Natural killer cell (primary cell): ENCODE measurements at regions of chr16 and their contacts with region 1.

Region 1: GRCh38 chr16:71845639-71846430 is at the start of gene ATXN1L:
- DNase-seq: peak; percentile 96 to 97
- ATAC-seq: peak; percentile 92 to 97 (median 93)
- H3K4me3 ChIP-seq: peak within 1 kb of the TSS; percentile 89
- H3K4me3 Mint-ChIP-seq: peak within 1 kb of the TSS; percentile 94
- H3K27ac ChIP-seq: peak within 1 kb of the TSS; percentile 88
- H3K27ac Mint-ChIP-seq: peak within 1 kb of the TSS; percentile 94 to 97
- H3K4me1 ChIP-seq: peaks cover 13% of the 10 kb centered on the region
- H3K4me1 Mint-ChIP-seq: peaks cover 30 to 37% of the 10 kb centered on the region in 2 donors
- H3K27me3 ChIP-seq: no peaks in the 10 kb centered on the region
- H3K27me3 Mint-ChIP-seq: no peaks in the 10 kb centered on the region
- CTCF ChIP-seq: no peak
- total RNA-seq, gene ATXN1L: 59.7 to 66.9 (median 59.8) TPM

Region 2: GRCh38 chr16:71626018-71626857 is 219.6 kb before region 1 on chr16 and contains the start of gene MARVELD3:
- intact Hi-C with region 1: no loop called
- DNase-seq: peak in 1 of 2 donors; percentile 31
- ATAC-seq: no peak
- H3K4me3 ChIP-seq: peak within 1 kb of the TSS; percentile 39
- H3K4me3 Mint-ChIP-seq: no peak within 1 kb of the TSS
- H3K27ac ChIP-seq: no peak within 1 kb of the TSS
- H3K27ac Mint-ChIP-seq: no peak within 1 kb of the TSS
- H3K4me1 ChIP-seq: peaks cover 11% of the 10 kb centered on the region
- H3K4me1 Mint-ChIP-seq: peaks cover 7 to 8% of the 10 kb centered on the region in 2 donors
- H3K27me3 ChIP-seq: peaks cover 17% of the 10 kb centered on the region
- H3K27me3 Mint-ChIP-seq: peaks cover 14 to 18% of the 10 kb centered on the region in 2 donors
- CTCF ChIP-seq: no peak
- total RNA-seq, gene MARVELD3: not detected

Region 3: DNA sequence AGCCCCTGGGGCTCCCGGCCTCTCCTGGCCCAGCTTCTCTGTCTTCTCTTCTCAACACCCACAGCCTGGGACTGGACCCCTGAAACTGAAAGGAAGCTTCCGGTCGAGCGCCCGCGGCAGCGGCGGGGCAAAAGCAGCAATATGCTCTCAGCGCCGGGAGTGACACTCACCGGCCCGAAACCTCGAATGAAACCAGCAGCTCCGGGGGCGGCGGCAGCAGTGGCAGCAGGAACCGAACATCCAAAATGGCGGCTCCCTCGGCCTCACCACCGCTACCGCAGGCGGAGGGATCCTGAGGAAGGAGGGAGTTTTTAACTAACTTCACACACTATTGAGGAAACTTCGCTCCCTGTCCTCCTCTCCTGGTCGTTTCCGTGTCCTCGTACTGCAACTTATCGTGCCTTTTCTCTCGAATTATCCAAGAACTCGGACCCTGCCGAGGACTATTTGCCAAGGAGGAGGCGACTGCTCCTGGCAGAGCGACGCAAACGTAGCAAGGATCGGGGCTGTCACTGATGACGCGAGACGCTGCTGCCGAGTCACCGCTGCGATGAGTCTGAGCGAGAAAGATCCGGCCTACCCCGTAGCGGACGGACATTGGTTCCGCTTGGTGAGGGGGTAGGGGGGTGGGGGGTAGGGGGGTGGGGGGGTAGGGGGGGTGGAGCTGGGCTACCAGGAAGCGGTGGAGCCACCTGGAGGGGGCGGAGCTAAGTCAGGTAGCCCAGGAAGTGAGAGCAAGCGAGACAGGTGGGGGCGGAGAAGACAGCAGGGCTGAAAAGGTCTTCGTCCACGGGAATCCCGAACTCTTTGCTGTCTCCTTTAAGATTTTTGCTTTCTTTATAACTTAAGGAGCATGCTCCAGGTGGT is 37.0 kb before region 1 on chr16 and contains the start of gene AP1G1:
- intact Hi-C with region 1: loop called (anchors 1 kb)
- DNase-seq: peak; percentile 86 to 98
- ATAC-seq: peak; percentile 90 to 97 (median 92)
- H3K4me3 ChIP-seq: peak within 1 kb of the TSS; percentile 89
- H3K4me3 Mint-ChIP-seq: peak within 1 kb of the TSS; percentile 90
- H3K27ac ChIP-seq: peak within 1 kb of the TSS; percentile 100
- H3K27ac Mint-ChIP-seq: peak within 1 kb of the TSS; percentile 93 to 95
- H3K4me1 ChIP-seq: peaks cover 22% of the 10 kb centered on the region
- H3K4me1 Mint-ChIP-seq: peaks cover 16 to 30% of the 10 kb centered on the region in 2 donors
- H3K27me3 ChIP-seq: no peaks in the 10 kb centered on the region
- H3K27me3 Mint-ChIP-seq: no peaks in the 10 kb centered on the region
- CTCF ChIP-seq: no peak
- total RNA-seq, gene AP1G1: 176 to 212 (median 188) TPM

Region 4: DNA sequence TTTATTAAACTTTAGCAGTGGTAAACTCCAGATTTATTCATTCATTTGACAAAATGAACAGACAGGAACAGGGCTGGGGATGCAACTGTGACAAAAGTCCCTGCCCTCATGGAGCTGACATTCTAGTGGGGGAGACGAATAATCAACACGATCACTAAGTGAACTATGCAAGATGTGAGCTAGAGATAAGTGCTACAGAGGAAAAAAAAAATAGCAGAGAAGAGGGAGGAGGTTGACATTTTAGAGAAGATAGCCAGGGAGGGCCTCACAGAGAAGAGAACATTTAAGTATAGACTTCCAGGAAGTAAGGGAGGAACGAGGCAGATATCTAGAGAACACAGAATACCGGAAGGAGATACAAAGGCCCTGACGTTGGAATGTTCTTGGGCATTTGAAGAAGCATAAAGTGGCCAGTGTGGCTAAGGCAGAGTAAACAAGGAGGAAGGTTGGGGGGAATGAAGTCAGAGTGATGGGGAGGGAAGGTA is 19.3 kb before region 1 on chr16:
- intact Hi-C with region 1: no loop called
- DNase-seq: no peak
- ATAC-seq: no peak
- H3K4me3 ChIP-seq: no peak overlapping the region
- H3K4me3 Mint-ChIP-seq: no peak overlapping the region
- H3K27ac ChIP-seq: no peak overlapping the region
- H3K27ac Mint-ChIP-seq: no peak overlapping the region
- H3K4me1 ChIP-seq: no peaks in the 10 kb centered on the region
- H3K4me1 Mint-ChIP-seq: no peaks in the 10 kb centered on the region
- H3K27me3 ChIP-seq: no peaks in the 10 kb centered on the region
- H3K27me3 Mint-ChIP-seq: no peaks in the 10 kb centered on the region
- CTCF ChIP-seq: no peak